Naive thymus-derived CD4-positive, alpha-beta T cell (primary cell): ENCODE measurements at regions of chr19 and their contacts with region 1.

Region 1: DNA sequence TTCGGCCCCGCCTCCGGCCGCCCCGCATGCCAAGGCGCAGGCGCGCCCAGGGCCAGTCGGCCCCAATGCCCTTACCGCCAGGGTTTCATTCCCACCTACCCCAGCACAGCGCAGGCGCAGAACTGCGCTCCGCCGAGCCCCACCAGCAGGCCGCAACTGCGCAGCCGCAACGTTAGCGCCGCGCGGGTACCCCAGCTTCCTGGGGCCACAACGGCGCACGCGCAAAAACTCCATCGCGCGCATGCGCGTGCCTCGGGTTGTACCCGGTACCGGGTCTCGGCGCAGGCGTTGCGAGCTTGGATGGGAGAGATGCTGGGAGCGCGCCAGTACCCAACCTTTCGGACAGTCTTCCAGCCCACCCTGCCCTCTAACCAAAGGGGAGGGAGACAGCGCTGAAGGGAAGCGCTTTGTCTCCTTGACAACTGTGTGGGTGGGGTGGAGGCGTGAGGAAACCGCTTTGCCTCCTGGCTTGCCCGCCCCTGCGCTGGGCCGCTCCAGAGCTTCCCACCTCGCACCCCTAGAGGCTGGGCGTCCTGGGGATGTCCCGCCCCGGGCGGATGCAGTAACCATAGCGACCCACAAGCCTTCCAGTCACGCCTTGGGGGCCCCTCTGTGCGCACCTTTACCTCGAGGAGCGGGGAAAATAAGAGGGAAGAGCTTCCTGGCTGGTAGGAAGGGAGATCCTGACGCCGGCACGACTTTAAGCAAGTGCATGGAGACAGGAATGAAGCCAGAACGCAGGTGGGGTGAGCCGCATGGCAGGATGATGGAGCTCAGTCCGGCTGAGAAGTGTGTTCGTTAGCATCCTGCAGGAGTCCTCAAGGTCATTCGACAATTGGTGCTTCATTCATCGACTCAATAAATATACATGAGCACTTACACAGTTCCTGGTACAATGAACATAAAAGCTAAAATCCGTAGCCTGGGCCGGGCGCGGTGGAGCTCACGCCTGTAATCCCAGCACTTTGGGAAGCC is 525 bp upstream of the MYPOP start:
- DNase-seq: peak; percentile 96 to 100 (median 99)
- ATAC-seq: peak; percentile 93
- H3K4me3 ChIP-seq: peak overlapping the region; percentile 93
- H3K4me3 Mint-ChIP-seq: peak overlapping the region; percentile 93 to 98 (median 96)
- H3K27ac ChIP-seq: peak overlapping the region; percentile 78
- H3K27ac Mint-ChIP-seq: peak overlapping the region; percentile 71 to 93 (median 87)
- H3K4me1 ChIP-seq: peaks cover 0 to 5% of the 10 kb centered on the region in 2 donors
- H3K4me1 Mint-ChIP-seq: peaks cover 10 to 27% (median 17%) of the 10 kb centered on the region in 7 donors
- H3K27me3 ChIP-seq: no peaks in the 10 kb centered on the region
- H3K27me3 Mint-ChIP-seq: peaks cover 0 to 17% (median 0%) of the 10 kb centered on the region in 5 donors

Region 2: DNA sequence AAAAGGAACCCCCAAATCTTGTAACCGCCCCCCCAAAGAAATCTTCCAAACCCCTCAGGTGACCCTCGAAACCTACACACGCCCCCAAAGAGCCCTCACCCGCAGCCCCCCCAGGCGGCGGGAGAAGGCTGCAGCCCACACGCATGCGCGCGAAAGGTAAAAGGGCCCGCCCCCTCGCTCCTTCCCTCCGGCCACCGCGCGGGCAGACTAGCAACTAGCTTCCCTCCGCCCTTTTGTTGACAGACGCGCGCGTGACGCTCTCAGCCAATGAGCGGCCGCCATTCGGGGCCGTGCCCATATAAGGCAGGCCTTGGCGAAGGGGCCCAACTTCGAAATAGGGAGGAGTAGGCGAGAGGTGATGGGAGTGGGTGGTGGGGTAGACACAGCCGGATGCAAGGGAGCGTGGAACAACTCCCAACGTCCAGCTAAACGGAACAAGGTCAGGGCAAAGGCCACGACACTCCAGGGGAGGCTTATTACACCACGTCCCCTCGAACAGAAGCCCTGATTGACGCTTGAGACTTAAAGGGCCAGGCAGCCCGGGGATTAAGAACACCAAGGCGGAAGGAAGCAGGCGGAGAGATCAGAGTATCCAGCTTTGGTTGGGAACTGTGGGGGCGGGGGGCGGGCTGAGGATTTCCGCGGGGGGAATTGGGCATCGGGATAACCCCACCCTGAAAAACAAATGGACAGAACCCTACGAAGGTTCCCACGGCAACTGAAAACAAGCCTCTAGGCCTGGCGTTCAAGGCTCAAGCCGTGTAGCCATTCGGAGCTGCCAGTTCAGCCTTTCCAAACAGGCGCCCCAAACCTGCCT is 185.6 kb before region 1 on chr19:
- CTCF ChIA-PET with region 1: no interaction called
- POLR2A ChIA-PET with region 1: interaction called, 6 read pairs
- intact Hi-C with region 1: loop called in 1 of 2 experiments (anchors 1 kb)
- DNase-seq: peak; percentile 92 to 99 (median 98)
- ATAC-seq: peak; percentile 98
- H3K4me3 ChIP-seq: peak overlapping the region; percentile 80
- H3K4me3 Mint-ChIP-seq: peak overlapping the region; percentile 89 to 99 (median 95)
- H3K27ac ChIP-seq: peak overlapping the region; percentile 89
- H3K27ac Mint-ChIP-seq: peak overlapping the region; percentile 88 to 97 (median 96)
- H3K4me1 ChIP-seq: peaks cover 17 to 26% of the 10 kb centered on the region in 2 donors
- H3K4me1 Mint-ChIP-seq: peaks cover 26 to 55% (median 38%) of the 10 kb centered on the region in 7 donors
- H3K27me3 ChIP-seq: no peaks in the 10 kb centered on the region
- H3K27me3 Mint-ChIP-seq: no peaks in the 10 kb centered on the region

Region 3: GRCh38 chr19:45804959-45805230 is 98.0 kb before region 1 on chr19:
- CTCF ChIA-PET with region 1: no interaction called
- POLR2A ChIA-PET with region 1: no interaction called
- intact Hi-C with region 1: no loop called
- DNase-seq: no peak
- ATAC-seq: no peak
- H3K4me3 ChIP-seq: no peak overlapping the region
- H3K4me3 Mint-ChIP-seq: no peak overlapping the region
- H3K27ac ChIP-seq: no peak overlapping the region
- H3K27ac Mint-ChIP-seq: no peak overlapping the region
- H3K4me1 ChIP-seq: no peaks in the 10 kb centered on the region
- H3K4me1 Mint-ChIP-seq: peaks cover 0 to 7% (median 0%) of the 10 kb centered on the region in 7 donors
- H3K27me3 ChIP-seq: no peaks in the 10 kb centered on the region
- H3K27me3 Mint-ChIP-seq: peaks cover 4 to 30% (median 5%) of the 10 kb centered on the region in 5 donors

Region 4: GRCh38 chr19:45817010-45817724 is 85.8 kb before region 1 on chr19:
- CTCF ChIA-PET with region 1: interaction called, 3 read pairs
- POLR2A ChIA-PET with region 1: no interaction called
- intact Hi-C with region 1: loop called in 1 of 2 experiments (anchors 1 kb)
- DNase-seq: peak; percentile 88 to 96 (median 93)
- ATAC-seq: peak; percentile 100
- H3K4me3 ChIP-seq: no peak overlapping the region
- H3K4me3 Mint-ChIP-seq: peak overlapping the region in 5 of 10 donors; percentile 16 to 54 (median 45)
- H3K27ac ChIP-seq: no peak overlapping the region
- H3K27ac Mint-ChIP-seq: peak overlapping the region in 7 of 9 donors; percentile 25 to 93 (median 42)
- H3K4me1 ChIP-seq: peaks cover 0 to 4% of the 10 kb centered on the region in 2 donors
- H3K4me1 Mint-ChIP-seq: peaks cover 0 to 7% (median 5%) of the 10 kb centered on the region in 7 donors
- H3K27me3 ChIP-seq: no peaks in the 10 kb centered on the region
- H3K27me3 Mint-ChIP-seq: peaks cover 0 to 20% (median 17%) of the 10 kb centered on the region in 5 donors

Region 5: GRCh38 chr19:45917421-45918091 is 14.6 kb after region 1 on chr19:
- CTCF ChIA-PET with region 1: no interaction called
- POLR2A ChIA-PET with region 1: no interaction called
- intact Hi-C with region 1: loop called in 1 of 2 experiments (anchors 1 kb)
- DNase-seq: no peak
- ATAC-seq: no peak
- H3K4me3 ChIP-seq: no peak overlapping the region
- H3K4me3 Mint-ChIP-seq: peak overlapping the region in 1 of 10 donors; percentile 67
- H3K27ac ChIP-seq: no peak overlapping the region
- H3K27ac Mint-ChIP-seq: peak overlapping the region in 1 of 9 donors; percentile 92
- H3K4me1 ChIP-seq: no peaks in the 10 kb centered on the region
- H3K4me1 Mint-ChIP-seq: peaks cover 0 to 42% (median 0%) of the 10 kb centered on the region in 7 donors
- H3K27me3 ChIP-seq: no peaks in the 10 kb centered on the region
- H3K27me3 Mint-ChIP-seq: peaks cover 5 to 21% (median 17%) of the 10 kb centered on the region in 5 donors

Region 6: DNA sequence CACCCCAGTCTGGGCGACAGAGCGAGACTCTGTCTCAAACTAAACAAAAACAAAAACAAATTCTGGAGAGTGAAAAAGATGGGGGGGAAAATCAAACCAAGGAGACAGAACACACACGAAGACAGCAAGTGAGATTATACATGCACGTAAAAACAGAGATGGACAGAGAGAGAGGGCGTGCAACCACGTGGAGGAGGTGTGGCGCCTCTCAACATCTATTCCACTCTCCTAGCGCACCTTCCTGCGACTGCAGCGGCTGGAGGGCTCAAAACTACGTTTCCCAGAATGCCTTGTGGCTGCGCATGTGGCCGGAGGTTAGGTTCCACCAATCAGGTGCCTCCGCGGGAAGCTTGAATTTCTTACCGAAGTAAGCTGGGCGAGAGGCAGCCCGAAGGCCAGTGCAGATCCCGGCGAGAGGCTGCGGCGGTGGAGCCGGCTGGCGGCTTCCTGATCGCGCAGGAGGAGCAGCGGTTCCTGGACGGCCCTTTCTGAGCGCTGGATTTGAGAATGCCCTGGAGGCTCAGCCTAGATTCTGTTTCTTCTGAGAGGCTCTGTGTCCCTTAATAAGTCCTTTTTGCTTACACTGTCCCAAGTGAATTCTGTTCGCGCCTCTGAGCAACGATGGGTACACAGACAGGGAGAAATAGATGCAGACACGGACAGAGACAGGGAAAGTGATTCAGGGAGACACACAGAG is 24.8 kb after region 1 on chr19:
- CTCF ChIA-PET with region 1: interaction called, 3 read pairs
- POLR2A ChIA-PET with region 1: no interaction called
- intact Hi-C with region 1: loop called (anchors 1 kb)
- DNase-seq: peak; percentile 66 to 89 (median 87)
- ATAC-seq: peak; percentile 99
- H3K4me3 ChIP-seq: no peak overlapping the region
- H3K4me3 Mint-ChIP-seq: peak overlapping the region in 7 of 10 donors; percentile 10 to 86 (median 55)
- H3K27ac ChIP-seq: no peak overlapping the region
- H3K27ac Mint-ChIP-seq: peak overlapping the region in 4 of 9 donors; percentile 28 to 60 (median 42)
- H3K4me1 ChIP-seq: peaks cover 4 to 5% of the 10 kb centered on the region in 2 donors
- H3K4me1 Mint-ChIP-seq: peaks cover 4 to 23% (median 6%) of the 10 kb centered on the region in 7 donors
- H3K27me3 ChIP-seq: no peaks in the 10 kb centered on the region
- H3K27me3 Mint-ChIP-seq: peaks cover 0 to 15% (median 9%) of the 10 kb centered on the region in 5 donors

Region 7: DNA sequence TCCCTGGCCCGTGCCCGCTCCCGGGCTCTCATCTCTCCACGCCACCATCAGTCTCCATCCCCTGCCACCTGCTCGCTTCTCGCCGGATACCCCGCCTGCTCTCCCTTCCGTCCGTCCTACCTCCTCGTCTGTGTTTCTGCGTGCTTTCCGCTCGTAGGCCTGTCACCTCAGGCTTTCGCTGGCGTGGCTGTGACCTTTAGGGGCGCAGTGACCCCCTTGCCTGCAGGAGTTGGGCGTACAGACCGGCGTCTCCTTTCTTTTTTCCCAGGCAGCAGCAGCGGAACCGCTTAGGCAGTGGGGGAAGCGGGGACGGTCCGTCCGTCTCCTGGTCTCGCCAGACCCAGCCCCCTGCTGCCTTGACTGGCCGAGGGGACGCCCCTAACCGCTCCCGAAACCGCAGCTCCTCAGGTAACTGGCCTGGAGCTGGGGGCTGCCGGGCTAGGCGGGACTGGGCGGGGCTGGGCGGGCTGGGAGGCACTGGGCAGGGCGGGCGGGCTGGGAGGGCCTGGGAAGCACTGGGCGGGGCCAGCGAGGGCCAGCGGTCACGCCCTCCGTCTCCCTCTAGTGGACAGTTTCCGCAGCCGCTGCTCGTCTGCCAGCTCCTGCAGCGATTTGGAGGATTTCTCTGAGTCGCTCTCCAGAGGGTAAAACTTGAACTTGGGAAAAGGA is 113.6 kb after region 1 on chr19:
- CTCF ChIA-PET with region 1: no interaction called
- POLR2A ChIA-PET with region 1: no interaction called
- intact Hi-C with region 1: loop called (anchors 5 kb)
- DNase-seq: peak; percentile 57 to 84 (median 75)
- ATAC-seq: peak; percentile 92
- H3K4me3 ChIP-seq: peak overlapping the region; percentile 62
- H3K4me3 Mint-ChIP-seq: peak overlapping the region; percentile 85 to 97 (median 92)
- H3K27ac ChIP-seq: peak overlapping the region; percentile 55
- H3K27ac Mint-ChIP-seq: peak overlapping the region in 7 of 9 donors; percentile 28 to 82 (median 50)
- H3K4me1 ChIP-seq: peaks cover 0 to 7% of the 10 kb centered on the region in 2 donors
- H3K4me1 Mint-ChIP-seq: peaks cover 11 to 23% (median 18%) of the 10 kb centered on the region in 7 donors
- H3K27me3 ChIP-seq: peaks cover 0 to 6% of the 10 kb centered on the region in 2 donors
- H3K27me3 Mint-ChIP-seq: peaks cover 5 to 17% (median 12%) of the 10 kb centered on the region in 5 donors

Region 8: GRCh38 chr19:46346821-46347571 is 444.1 kb after region 1 on chr19 and contains the start of gene PPP5C:
- CTCF ChIA-PET with region 1: no interaction called
- POLR2A ChIA-PET with region 1: no interaction called
- intact Hi-C with region 1: loop called in 1 of 2 experiments (anchors 2 kb)
- DNase-seq: peak; percentile 74 to 89 (median 79)
- ATAC-seq: peak; percentile 90
- H3K4me3 ChIP-seq: peak within 1 kb of the TSS; percentile 73
- H3K4me3 Mint-ChIP-seq: peak within 1 kb of the TSS; percentile 87 to 97 (median 94)
- H3K27ac ChIP-seq: peak within 1 kb of the TSS; percentile 89
- H3K27ac Mint-ChIP-seq: peak within 1 kb of the TSS; percentile 85 to 97 (median 92)
- H3K4me1 ChIP-seq: peaks cover 39 to 43% of the 10 kb centered on the region in 2 donors
- H3K4me1 Mint-ChIP-seq: peaks cover 49 to 63% (median 52%) of the 10 kb centered on the region in 7 donors
- H3K27me3 ChIP-seq: no peaks in the 10 kb centered on the region
- H3K27me3 Mint-ChIP-seq: peaks cover 0 to 23% (median 0%) of the 10 kb centered on the region in 5 donors
- total RNA-seq, gene PPP5C: 41.4 to 107 (median 52.0) TPM

Region 9: DNA sequence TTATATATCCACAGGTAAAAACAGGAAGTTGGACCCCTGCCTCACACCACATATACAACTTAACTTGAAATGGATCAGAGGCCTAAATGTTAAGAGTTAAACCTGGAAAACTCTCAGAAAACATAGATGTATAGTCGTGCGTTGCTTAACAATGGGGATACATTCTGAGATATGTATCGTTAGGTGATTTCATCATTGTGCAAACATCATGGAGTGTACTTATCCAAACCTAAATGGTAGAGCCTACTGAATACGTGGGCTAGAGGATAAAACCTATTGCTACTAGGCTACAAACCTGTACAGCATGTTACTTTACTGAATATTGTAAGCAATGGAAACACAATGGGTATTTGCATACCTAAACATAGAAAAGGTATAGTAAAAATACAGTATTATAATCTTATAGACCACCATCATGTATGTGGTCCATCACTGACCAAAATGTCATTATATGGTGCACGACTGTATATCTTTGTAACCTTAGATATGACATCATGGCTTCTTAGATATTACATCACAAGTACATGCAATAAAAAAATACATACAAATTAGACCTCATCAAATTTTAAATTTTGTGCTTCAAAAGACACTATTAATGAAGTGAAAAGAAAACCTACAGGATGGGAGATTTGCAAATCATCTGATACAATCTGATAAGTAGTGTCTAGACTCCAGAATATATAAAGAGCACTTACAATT is 683.5 kb after region 1 on chr19:
- CTCF ChIA-PET with region 1: no interaction called
- POLR2A ChIA-PET with region 1: no interaction called
- intact Hi-C with region 1: no loop called
- DNase-seq: no peak
- ATAC-seq: no peak
- H3K4me3 ChIP-seq: no peak overlapping the region
- H3K4me3 Mint-ChIP-seq: no peak overlapping the region
- H3K27ac ChIP-seq: no peak overlapping the region
- H3K27ac Mint-ChIP-seq: no peak overlapping the region
- H3K4me1 ChIP-seq: no peaks in the 10 kb centered on the region
- H3K4me1 Mint-ChIP-seq: peaks cover 2 to 17% (median 9%) of the 10 kb centered on the region in 7 donors
- H3K27me3 ChIP-seq: no peaks in the 10 kb centered on the region
- H3K27me3 Mint-ChIP-seq: peaks cover 0 to 42% (median 0%) of the 10 kb centered on the region in 5 donors